Activated CD4-positive, alpha-beta memory T cell treated with anti-CD3 and anti-CD28 coated beads, Interleukin-2, amount 10 ng/mL, durations not matched to agents 7 days and 5 days (primary cell): ENCODE measurements at regions of chr12 and their contacts with region 1.

Region 1: DNA sequence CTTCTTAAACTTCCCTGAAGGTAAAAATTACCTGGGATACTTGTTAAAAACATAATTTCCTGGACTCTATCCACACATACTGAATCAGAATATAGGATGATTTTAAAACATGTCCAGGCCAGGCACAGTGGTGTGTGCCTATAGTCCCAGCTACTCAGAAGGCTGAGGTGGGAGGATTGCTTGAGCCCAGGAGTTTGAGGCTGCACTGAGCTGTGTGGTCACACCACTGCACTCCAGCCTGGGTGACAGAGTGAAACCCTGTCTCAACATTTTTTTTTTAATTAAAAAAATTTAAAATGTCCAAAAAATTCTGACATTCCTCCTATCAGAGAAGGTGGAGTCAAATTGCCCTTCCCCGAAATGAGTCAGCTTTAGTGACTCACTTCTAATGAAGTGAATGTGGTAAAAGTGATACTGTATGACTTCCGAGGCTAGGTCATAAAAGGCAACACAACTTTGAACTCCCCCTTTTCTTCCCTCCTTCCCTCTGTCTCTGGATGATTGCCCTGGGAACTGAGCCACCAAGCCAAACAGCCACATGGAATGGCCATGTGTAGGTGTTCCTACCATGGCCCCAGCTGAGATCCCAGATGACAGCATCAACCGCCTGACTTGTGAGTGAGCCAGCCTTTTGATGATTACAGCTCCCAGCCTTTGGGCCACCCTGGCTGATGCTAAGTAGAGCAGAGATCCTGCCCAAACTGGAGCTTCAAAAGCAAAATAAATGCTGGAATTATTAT is 36.3 kb downstream of the LIMA1 start:
- DNase-seq: peak; percentile 43
- H3K4me3 Mint-ChIP-seq: peak overlapping the region; percentile 79
- H3K27ac Mint-ChIP-seq: peak overlapping the region; percentile 94
- H3K4me1 Mint-ChIP-seq: peaks cover 76% of the 10 kb centered on the region
- H3K27me3 Mint-ChIP-seq: no peaks in the 10 kb centered on the region

Region 2: DNA sequence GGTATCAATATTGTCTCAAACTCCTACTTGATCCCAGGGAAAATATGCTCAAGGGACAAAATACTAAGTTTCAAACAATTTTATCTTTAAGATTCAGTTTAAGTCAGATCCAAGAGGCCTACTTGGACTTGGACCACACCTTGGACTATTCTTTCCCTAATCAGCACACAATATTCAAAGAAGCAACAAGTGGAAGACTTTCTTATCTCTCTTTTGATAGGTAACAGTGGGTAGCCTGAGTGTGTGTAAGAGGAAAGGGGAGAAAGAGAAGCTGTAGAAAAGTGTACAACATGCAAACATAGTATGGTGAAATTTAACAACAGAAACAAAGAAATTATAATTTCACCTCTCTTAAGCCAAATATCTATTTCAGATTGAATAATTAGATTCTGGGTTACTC is 86.4 kb before region 1 on chr12:
- CTCF ChIA-PET with region 1: no interaction called
- POLR2A ChIA-PET with region 1: no interaction called
- DNase-seq: no peak
- H3K4me3 Mint-ChIP-seq: no peak overlapping the region
- H3K27ac Mint-ChIP-seq: no peak overlapping the region
- H3K4me1 Mint-ChIP-seq: peaks cover 33% of the 10 kb centered on the region
- H3K27me3 Mint-ChIP-seq: no peaks in the 10 kb centered on the region

Region 3: GRCh38 chr12:50211392-50212070 is 35.5 kb before region 1 on chr12:
- CTCF ChIA-PET with region 1: interaction called, 5 read pairs
- POLR2A ChIA-PET with region 1: interaction called, 10 read pairs
- DNase-seq: no peak
- H3K4me3 Mint-ChIP-seq: peak overlapping the region; percentile 38
- H3K27ac Mint-ChIP-seq: peak overlapping the region; percentile 87
- H3K4me1 Mint-ChIP-seq: peaks cover 51% of the 10 kb centered on the region
- H3K27me3 Mint-ChIP-seq: no peaks in the 10 kb centered on the region

Region 4: DNA sequence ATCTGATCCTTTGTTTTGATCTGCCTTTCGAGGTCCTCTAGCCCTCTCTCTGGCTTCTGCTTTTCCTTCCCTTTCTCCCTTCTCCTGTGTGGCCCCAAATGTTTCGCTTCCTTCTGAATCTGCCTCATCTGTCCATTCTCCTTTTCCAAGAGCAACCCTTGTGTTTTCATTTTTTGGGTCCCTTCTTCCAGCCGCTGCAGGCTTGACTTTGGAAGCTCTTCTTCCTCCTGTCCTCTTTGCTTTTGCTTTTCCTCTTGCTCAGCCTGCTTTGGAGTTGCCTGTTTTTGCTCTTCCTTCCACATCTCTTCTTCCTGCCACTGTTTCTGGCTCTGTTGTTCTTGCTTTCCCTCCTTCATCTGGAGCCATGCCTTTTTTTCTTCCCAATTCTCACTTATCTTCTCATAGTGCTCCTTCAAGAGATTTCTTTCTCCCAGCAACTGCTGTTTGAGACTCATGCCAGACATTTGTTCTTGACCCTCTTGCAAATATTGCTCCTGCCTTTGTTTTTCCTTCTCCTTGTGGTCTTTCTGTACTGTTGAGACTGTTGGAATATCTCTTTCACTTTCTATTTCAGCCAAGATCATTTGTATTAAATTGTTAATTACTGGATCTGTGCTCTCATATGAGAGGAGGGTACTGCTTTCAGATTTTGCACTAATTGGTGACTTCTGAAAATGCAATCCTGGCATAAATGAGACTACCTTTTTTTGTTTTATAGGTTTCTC is 107.0 kb after region 1 on chr12:
- CTCF ChIA-PET with region 1: no interaction called
- POLR2A ChIA-PET with region 1: no interaction called
- DNase-seq: no peak
- H3K4me3 Mint-ChIP-seq: no peak overlapping the region
- H3K27ac Mint-ChIP-seq: no peak overlapping the region
- H3K4me1 Mint-ChIP-seq: no peaks in the 10 kb centered on the region
- H3K27me3 Mint-ChIP-seq: no peaks in the 10 kb centered on the region